GM13977 (cell line): ENCODE measurements at regions of chr10 and their contacts with region 1.

Region 1: GRCh38 chr10:88800152-88801125 is 2.1 kb upstream of the LIPM start:
- DNase-seq: no peak
- CTCF ChIP-seq: no peak

Region 2: DNA sequence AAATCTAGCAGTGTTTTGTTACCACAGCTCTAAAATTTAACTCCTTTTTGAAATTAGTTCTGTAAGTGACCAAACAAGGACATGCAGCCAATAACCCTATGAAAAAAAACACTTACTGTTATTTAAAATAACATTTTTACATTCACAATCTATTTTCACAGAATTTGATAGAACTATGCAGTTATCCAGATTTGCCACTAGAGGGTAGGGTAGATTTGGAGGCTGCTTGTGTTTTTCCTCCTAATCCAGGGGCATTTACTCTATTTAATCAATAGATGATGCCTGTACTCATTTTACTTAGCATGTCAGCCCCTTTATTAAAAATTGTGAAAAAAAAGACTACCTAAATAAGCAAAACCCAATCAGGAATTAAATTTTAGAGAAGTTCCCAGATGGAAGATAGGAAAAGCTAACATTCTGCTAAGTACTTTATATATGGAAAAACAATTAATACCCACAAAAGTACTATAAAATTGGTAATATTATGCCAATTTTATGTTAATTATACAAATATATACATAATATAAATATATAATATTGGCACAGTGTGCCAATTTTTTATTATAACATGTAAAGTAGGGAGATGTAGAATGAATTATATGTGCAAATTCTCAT is 112.5 kb before region 1 on chr10:
- in situ Hi-C with region 1: loop called (anchors 10 kb)
- DNase-seq: peak; percentile 43
- CTCF ChIP-seq: peak; percentile 71